Naive thymus-derived CD4-positive, alpha-beta T cell (primary cell): ENCODE measurements at regions of chr3 and their contacts with region 1.

Region 1: DNA sequence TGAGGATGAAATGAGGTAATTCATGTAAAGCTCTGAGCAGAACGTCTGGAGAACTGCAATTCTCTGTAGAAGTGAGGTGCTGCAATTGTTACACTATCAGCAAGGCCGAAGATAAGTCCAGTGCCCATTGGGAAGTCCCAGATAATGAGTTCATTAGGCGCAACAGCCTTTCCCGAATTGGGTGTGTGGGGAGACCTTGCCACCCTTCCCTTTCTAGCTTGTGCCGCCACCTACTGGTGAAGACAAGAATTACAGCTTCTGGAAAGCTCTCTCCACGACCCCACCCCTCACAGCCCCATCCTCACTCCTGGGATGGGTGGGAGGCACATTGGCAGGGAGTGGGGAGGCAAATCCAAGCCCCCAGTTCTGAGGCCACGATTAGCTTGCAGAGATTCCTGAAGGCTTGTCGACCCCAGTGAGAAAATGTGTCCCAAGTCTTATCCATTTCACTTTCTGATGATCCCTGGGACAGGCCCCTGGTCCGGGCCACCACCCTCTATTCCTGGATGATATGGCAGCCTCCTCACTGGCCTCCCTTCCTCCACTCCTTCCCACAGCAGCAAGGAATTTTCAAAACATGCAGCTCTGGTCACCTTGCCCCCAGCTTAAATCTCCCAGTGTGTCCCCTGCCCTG is 36.4 kb downstream of the FAM3D start:
- DNase-seq: peak; percentile 14 to 62 (median 33)
- ATAC-seq: peak; percentile 69
- H3K4me3 ChIP-seq: no peak overlapping the region
- H3K4me3 Mint-ChIP-seq: no peak overlapping the region
- H3K27ac ChIP-seq: no peak overlapping the region
- H3K27ac Mint-ChIP-seq: peak overlapping the region in 1 of 9 donors; percentile 42
- H3K4me1 ChIP-seq: no peaks in the 10 kb centered on the region
- H3K4me1 Mint-ChIP-seq: peaks cover 0 to 2% (median 0%) of the 10 kb centered on the region in 7 donors
- H3K27me3 ChIP-seq: no peaks in the 10 kb centered on the region
- H3K27me3 Mint-ChIP-seq: peaks cover 0 to 25% (median 11%) of the 10 kb centered on the region in 5 donors

Region 2: DNA sequence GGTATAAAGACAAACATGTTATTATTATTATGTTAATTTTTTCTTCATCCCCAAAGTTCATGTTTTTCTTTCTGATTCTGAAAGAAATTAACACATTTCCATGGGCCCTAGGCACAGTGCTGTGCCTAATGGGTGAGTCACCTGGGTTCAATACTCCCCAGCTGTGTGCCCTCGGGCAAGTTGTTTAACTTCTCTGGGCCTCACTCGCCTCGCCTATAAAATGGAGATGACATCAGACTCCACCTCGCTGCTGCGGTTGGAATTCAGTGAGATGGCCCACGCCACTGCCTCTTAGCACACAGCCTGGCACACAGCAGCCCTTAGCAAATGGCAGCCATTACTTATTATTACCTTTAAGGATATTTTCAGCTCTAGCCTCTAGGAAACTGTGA is 442.0 kb before region 1 on chr3:
- CTCF ChIA-PET with region 1: no interaction called
- POLR2A ChIA-PET with region 1: no interaction called
- intact Hi-C with region 1: loop called in 1 of 2 experiments (anchors 5 kb)
- DNase-seq: no peak
- ATAC-seq: no peak
- H3K4me3 ChIP-seq: no peak overlapping the region
- H3K4me3 Mint-ChIP-seq: no peak overlapping the region
- H3K27ac ChIP-seq: no peak overlapping the region
- H3K27ac Mint-ChIP-seq: no peak overlapping the region
- H3K4me1 ChIP-seq: no peaks in the 10 kb centered on the region
- H3K4me1 Mint-ChIP-seq: peaks cover 0 to 3% (median 0%) of the 10 kb centered on the region in 7 donors
- H3K27me3 ChIP-seq: no peaks in the 10 kb centered on the region
- H3K27me3 Mint-ChIP-seq: no peaks in the 10 kb centered on the region

Region 3: GRCh38 chr3:58324391-58325390 is 305.5 kb before region 1 on chr3:
- CTCF ChIA-PET with region 1: no interaction called
- POLR2A ChIA-PET with region 1: no interaction called
- intact Hi-C with region 1: loop called (anchors 1 to 5 kb)
- DNase-seq: peak in 1 of 9 donors; percentile 26
- ATAC-seq: peak; percentile 27
- H3K4me3 ChIP-seq: no peak overlapping the region
- H3K4me3 Mint-ChIP-seq: peak overlapping the region in 1 of 10 donors; percentile 24
- H3K27ac ChIP-seq: peak overlapping the region; percentile 14
- H3K27ac Mint-ChIP-seq: peak overlapping the region in 8 of 9 donors; percentile 25 to 85 (median 68)
- H3K4me1 ChIP-seq: no peaks in the 10 kb centered on the region
- H3K4me1 Mint-ChIP-seq: peaks cover 0 to 25% (median 18%) of the 10 kb centered on the region in 7 donors
- H3K27me3 ChIP-seq: no peaks in the 10 kb centered on the region
- H3K27me3 Mint-ChIP-seq: no peaks in the 10 kb centered on the region

Region 4: GRCh38 chr3:58463181-58463941 is 166.8 kb before region 1 on chr3:
- CTCF ChIA-PET with region 1: interaction called, 4 read pairs
- POLR2A ChIA-PET with region 1: no interaction called
- intact Hi-C with region 1: loop called (anchors 1 kb)
- DNase-seq: peak; percentile 16 to 76 (median 40)
- ATAC-seq: peak; percentile 98
- H3K4me3 ChIP-seq: peak overlapping the region; percentile 20
- H3K4me3 Mint-ChIP-seq: peak overlapping the region in 7 of 10 donors; percentile 34 to 65 (median 51)
- H3K27ac ChIP-seq: no peak overlapping the region
- H3K27ac Mint-ChIP-seq: no peak overlapping the region
- H3K4me1 ChIP-seq: peaks cover 4 to 7% of the 10 kb centered on the region in 2 donors
- H3K4me1 Mint-ChIP-seq: peaks cover 0 to 12% (median 6%) of the 10 kb centered on the region in 7 donors
- H3K27me3 ChIP-seq: no peaks in the 10 kb centered on the region
- H3K27me3 Mint-ChIP-seq: peaks cover 0 to 7% (median 0%) of the 10 kb centered on the region in 5 donors

Region 5: GRCh38 chr3:58568572-58569286 is 61.5 kb before region 1 on chr3:
- CTCF ChIA-PET with region 1: interaction called, 7 read pairs
- POLR2A ChIA-PET with region 1: no interaction called
- intact Hi-C with region 1: loop called (anchors 1 kb)
- DNase-seq: peak; percentile 5 to 75 (median 48)
- ATAC-seq: peak; percentile 68
- H3K4me3 ChIP-seq: no peak overlapping the region
- H3K4me3 Mint-ChIP-seq: peak overlapping the region in 7 of 10 donors; percentile 17 to 54 (median 36)
- H3K27ac ChIP-seq: no peak overlapping the region
- H3K27ac Mint-ChIP-seq: peak overlapping the region in 4 of 9 donors; percentile 3 to 62 (median 42)
- H3K4me1 ChIP-seq: no peaks in the 10 kb centered on the region
- H3K4me1 Mint-ChIP-seq: peaks cover 4 to 7% (median 6%) of the 10 kb centered on the region in 7 donors
- H3K27me3 ChIP-seq: no peaks in the 10 kb centered on the region
- H3K27me3 Mint-ChIP-seq: peaks cover 0 to 8% (median 4%) of the 10 kb centered on the region in 5 donors

Region 6: GRCh38 chr3:58952128-58952917 is 322.1 kb after region 1 on chr3:
- CTCF ChIA-PET with region 1: no interaction called
- POLR2A ChIA-PET with region 1: no interaction called
- intact Hi-C with region 1: no loop called
- DNase-seq: no peak
- ATAC-seq: no peak
- H3K4me3 ChIP-seq: no peak overlapping the region
- H3K4me3 Mint-ChIP-seq: no peak overlapping the region
- H3K27ac ChIP-seq: no peak overlapping the region
- H3K27ac Mint-ChIP-seq: no peak overlapping the region
- H3K4me1 ChIP-seq: no peaks in the 10 kb centered on the region
- H3K4me1 Mint-ChIP-seq: no peaks in the 10 kb centered on the region
- H3K27me3 ChIP-seq: no peaks in the 10 kb centered on the region
- H3K27me3 Mint-ChIP-seq: peaks cover 0 to 11% (median 0%) of the 10 kb centered on the region in 5 donors